Activated T-helper 2 cell treated with anti-CD3 and anti-CD28 coated beads, Interferon-gamma antibody, Interleukin-2, Interleukin-4, amounts not matched to agents 10 μg/mL and 5 μg/mL and 100 μg/mL, durations not matched to agents 14 hours and 24 hours and 36 hours (primary cell): ENCODE measurements at regions of chr2 and their contacts with region 1.

Region 1: GRCh38 chr2:156341452-156342253 is 9.1 kb upstream of the NR4A2 start:
- DNase-seq: peak; percentile 88
- H3K4me3 Mint-ChIP-seq: peak overlapping the region; percentile 87
- H3K27ac Mint-ChIP-seq: peak overlapping the region; percentile 94
- H3K4me1 Mint-ChIP-seq: peaks cover 48% of the 10 kb centered on the region
- H3K27me3 Mint-ChIP-seq: no peaks in the 10 kb centered on the region

Region 2: GRCh38 chr2:156046900-156047299 is 294.8 kb before region 1 on chr2:
- intact Hi-C with region 1: no loop called
- DNase-seq: no peak
- H3K4me3 Mint-ChIP-seq: no peak overlapping the region
- H3K27ac Mint-ChIP-seq: no peak overlapping the region
- H3K4me1 Mint-ChIP-seq: no peaks in the 10 kb centered on the region
- H3K27me3 Mint-ChIP-seq: no peaks in the 10 kb centered on the region

Region 3: DNA sequence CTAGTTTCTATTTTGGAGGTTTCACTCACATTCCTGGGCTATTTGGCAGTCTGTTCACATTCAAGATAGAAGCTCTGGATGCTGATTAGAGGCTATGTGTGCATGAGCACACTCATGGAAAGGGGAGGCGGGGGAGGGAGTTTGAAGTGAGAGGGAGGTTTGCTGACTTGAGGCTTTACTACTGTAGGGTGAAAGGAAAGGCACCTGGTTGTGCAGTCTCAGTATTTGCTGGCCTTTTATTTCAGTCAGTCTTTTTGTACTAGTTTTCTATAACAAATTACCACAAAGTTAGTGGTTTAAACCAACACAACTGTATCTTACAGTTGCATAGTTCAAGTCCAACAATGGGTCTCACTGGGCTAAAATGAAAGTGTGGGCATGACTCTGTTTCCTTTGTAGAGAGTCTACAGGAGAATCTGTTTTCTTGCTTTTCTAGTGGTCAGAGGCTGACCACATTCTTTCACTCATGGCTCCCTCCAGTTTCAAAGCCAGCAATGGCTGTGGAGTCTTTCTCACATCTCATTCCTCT is 38.5 kb after region 1 on chr2:
- intact Hi-C with region 1: loop called (anchors 1 kb)
- DNase-seq: no peak
- H3K4me3 Mint-ChIP-seq: no peak overlapping the region
- H3K27ac Mint-ChIP-seq: peak overlapping the region; percentile 43
- H3K4me1 Mint-ChIP-seq: peaks cover 43% of the 10 kb centered on the region
- H3K27me3 Mint-ChIP-seq: no peaks in the 10 kb centered on the region

Region 4: DNA sequence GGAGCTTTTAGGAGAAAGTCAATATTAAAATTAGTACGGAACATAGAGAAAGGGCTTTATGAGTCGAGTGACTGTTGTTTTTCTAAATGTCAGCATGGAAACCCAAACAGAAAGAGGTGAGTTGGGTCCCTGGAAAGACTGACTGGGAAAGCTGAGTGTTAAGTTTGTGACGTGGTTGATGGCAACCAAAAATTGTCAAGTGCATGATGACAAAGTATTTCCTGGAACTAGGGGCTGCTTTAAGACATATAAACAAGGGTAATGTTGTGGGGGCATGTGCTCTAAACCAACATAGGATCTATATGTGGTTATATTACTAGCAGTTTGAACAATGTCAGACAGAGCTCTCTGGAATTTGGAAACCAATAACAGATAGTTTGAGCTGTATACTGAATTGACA is 43.6 kb after region 1 on chr2:
- intact Hi-C with region 1: loop called (anchors 1 kb)
- DNase-seq: no peak
- H3K4me3 Mint-ChIP-seq: no peak overlapping the region
- H3K27ac Mint-ChIP-seq: peak overlapping the region; percentile 77
- H3K4me1 Mint-ChIP-seq: peaks cover 37% of the 10 kb centered on the region
- H3K27me3 Mint-ChIP-seq: no peaks in the 10 kb centered on the region

Region 5: GRCh38 chr2:156423674-156424282 is 82.1 kb after region 1 on chr2:
- intact Hi-C with region 1: no loop called
- DNase-seq: no peak
- H3K4me3 Mint-ChIP-seq: no peak overlapping the region
- H3K27ac Mint-ChIP-seq: no peak overlapping the region
- H3K4me1 Mint-ChIP-seq: peaks cover 4% of the 10 kb centered on the region
- H3K27me3 Mint-ChIP-seq: peaks cover 24% of the 10 kb centered on the region

Region 6: GRCh38 chr2:157468931-157469708 is 1127.5 kb after region 1 on chr2:
- intact Hi-C with region 1: loop called (anchors 5 kb)
- DNase-seq: no peak
- H3K4me3 Mint-ChIP-seq: peak overlapping the region; percentile 69
- H3K27ac Mint-ChIP-seq: peak overlapping the region; percentile 96
- H3K4me1 Mint-ChIP-seq: peaks cover 86% of the 10 kb centered on the region
- H3K27me3 Mint-ChIP-seq: no peaks in the 10 kb centered on the region